Caco-2 (cell line): ENCODE measurements at regions of chr6 and their contacts with region 1.

Region 1: GRCh38 chr6:122491919-122492555 is 20.4 kb upstream of the SERINC1 start:
- DNase-seq: peak; percentile 63 to 76
- H3K4me3 ChIP-seq: no peak overlapping the region
- H3K4me3 Mint-ChIP-seq: no peak overlapping the region
- H3K27ac Mint-ChIP-seq: no peak overlapping the region
- H3K4me1 ChIP-seq: no peaks in the 10 kb centered on the region
- H3K4me1 Mint-ChIP-seq: peaks cover 6% of the 10 kb centered on the region
- H3K27me3 ChIP-seq: no peaks in the 10 kb centered on the region
- H3K27me3 Mint-ChIP-seq: peaks cover 2% of the 10 kb centered on the region
- CTCF ChIP-seq: peak; percentile 77 to 88

Region 2: DNA sequence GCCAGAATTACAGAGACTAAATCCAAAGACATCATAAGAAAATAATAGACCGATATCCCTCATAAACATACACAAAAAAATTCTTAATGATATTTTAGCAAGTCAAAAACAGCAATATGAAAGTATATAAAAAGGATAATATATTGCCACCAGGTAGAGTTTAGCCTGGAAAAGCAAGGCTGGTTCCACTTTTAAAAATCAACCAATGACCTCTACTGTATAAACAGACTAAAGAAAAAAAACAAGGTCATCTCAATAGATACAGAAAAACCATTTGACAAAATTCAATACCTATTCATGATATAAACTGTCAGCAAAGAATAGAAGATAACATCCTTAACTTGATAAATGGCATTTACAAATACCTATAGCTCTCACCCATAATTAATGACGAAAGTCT is 30.2 kb before region 1 on chr6:
- CTCF ChIA-PET with region 1: no interaction called
- POLR2A ChIA-PET with region 1: no interaction called
- intact Hi-C with region 1: no loop called
- DNase-seq: no peak
- H3K4me3 ChIP-seq: no peak overlapping the region
- H3K4me3 Mint-ChIP-seq: no peak overlapping the region
- H3K27ac Mint-ChIP-seq: no peak overlapping the region
- H3K4me1 ChIP-seq: peaks cover 11% of the 10 kb centered on the region
- H3K4me1 Mint-ChIP-seq: peaks cover 25% of the 10 kb centered on the region
- H3K27me3 ChIP-seq: no peaks in the 10 kb centered on the region
- H3K27me3 Mint-ChIP-seq: no peaks in the 10 kb centered on the region
- CTCF ChIP-seq: no peak

Region 3: GRCh38 chr6:122530440-122531046 is 38.5 kb after region 1 on chr6:
- CTCF ChIA-PET with region 1: interaction called, 108 read pairs
- POLR2A ChIA-PET with region 1: no interaction called
- intact Hi-C with region 1: loop called (anchors 1 kb)
- DNase-seq: peak; percentile 38 to 66
- H3K4me3 ChIP-seq: no peak overlapping the region
- H3K4me3 Mint-ChIP-seq: no peak overlapping the region
- H3K27ac Mint-ChIP-seq: no peak overlapping the region
- H3K4me1 ChIP-seq: no peaks in the 10 kb centered on the region
- H3K4me1 Mint-ChIP-seq: no peaks in the 10 kb centered on the region
- H3K27me3 ChIP-seq: no peaks in the 10 kb centered on the region
- H3K27me3 Mint-ChIP-seq: peaks cover 5% of the 10 kb centered on the region
- CTCF ChIP-seq: peak; percentile 81 to 90

Region 4: GRCh38 chr6:122681705-122682104 is 189.7 kb after region 1 on chr6:
- CTCF ChIA-PET with region 1: no interaction called
- POLR2A ChIA-PET with region 1: no interaction called
- intact Hi-C with region 1: loop called (anchors 1 kb)
- DNase-seq: peak in 1 of 2 experiments; percentile 14
- H3K4me3 ChIP-seq: no peak overlapping the region
- H3K4me3 Mint-ChIP-seq: no peak overlapping the region
- H3K27ac Mint-ChIP-seq: no peak overlapping the region
- H3K4me1 ChIP-seq: no peaks in the 10 kb centered on the region
- H3K4me1 Mint-ChIP-seq: peaks cover 12% of the 10 kb centered on the region
- H3K27me3 ChIP-seq: no peaks in the 10 kb centered on the region
- H3K27me3 Mint-ChIP-seq: no peaks in the 10 kb centered on the region
- CTCF ChIP-seq: peak in 1 of 2 experiments; percentile 17